Panc1 (cell line): ENCODE measurements at regions of chr3 and their contacts with region 1.

Region 1: DNA sequence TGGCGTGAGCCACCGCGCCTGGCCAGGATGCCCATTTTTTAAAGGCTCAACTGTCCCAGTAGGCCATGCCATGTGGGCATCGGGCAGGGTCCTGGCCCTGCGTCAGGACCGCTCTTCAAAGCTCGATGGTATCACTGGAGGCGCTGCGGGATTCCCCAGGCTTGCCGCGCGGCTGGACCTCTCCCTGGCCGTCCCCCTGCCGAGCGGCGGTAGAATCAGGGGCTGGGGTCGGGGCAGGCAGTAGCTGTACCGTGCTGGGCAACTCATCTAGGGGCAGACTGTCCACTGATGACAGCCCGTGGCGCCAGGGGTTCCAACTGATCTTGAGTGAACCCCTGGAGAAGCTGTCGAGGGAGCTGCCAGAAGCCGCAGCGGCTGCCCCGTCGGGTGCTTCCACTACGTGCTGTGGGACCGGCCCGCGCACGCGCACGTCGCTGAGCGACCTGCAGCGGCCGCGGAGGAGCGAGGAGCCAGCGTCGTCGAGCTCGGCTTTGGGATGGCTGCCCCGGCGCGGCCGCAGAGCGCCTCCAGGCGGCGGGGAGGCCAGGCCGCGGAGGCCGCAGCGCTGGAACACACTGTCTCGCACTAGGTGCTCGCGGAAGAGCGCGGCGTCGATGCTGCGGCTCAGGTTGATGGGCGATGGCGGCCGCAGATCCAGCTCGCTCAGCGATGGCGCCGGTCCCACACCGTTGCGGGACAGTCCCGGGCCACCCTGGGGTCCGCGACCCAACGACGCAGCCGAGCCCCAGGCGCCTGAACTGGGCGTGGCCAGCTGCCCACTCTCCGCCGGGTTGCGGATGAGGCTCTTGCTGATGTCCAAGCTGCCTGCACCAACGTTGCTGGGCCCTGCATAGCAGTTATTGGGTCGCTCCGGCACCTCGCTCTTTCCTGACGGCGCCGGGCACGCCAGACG is 5.8 kb downstream of the PRRT3 start:
- DNase-seq: no peak
- ATAC-seq: peak; percentile 90
- H3K4me3 ChIP-seq: peak overlapping the region; percentile 58 to 70
- H3K27ac ChIP-seq: peak overlapping the region; percentile 83
- H3K4me1 ChIP-seq: no peaks in the 10 kb centered on the region
- H3K27me3 ChIP-seq: no peaks in the 10 kb centered on the region
- CTCF ChIP-seq: peak; percentile 88

Region 2: DNA sequence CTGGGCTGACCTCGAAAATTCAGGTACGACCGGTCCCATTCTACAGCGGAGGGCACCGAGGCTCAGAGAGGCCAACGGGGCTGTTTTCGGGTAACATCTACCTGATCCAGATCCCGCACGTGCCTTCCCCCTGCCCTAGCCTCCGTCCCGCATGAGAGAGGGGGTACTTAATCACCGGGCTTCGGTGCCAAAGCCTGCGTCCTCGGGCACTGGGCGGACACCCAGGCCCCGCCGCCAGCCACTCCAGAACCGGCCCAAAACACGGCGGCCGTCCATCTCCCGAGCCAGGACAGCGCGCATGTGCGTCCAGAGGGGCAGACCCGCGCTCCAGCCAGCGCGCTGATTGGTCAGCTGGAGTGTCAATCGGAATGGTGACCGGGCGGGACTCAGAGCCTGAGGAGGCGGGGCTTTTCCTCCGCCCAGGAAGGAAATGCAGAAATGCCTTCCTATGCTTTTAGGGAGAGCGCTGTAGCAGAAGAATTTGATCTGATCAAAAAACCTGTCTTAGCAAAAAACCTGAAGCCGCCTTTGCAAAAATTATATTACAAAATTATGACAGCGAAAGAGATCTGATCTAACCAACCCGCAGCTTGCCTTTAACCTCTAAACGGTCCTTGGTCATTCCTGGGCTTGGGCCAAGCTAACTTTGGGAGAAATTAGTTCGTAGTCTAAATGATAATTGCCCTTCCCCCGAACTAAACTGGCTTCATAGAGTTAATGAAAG is 102.5 kb before region 1 on chr3 and contains the start of gene RPUSD3:
- CTCF ChIA-PET with region 1: interaction called, 7 read pairs
- POLR2A ChIA-PET with region 1: interaction called, 14 read pairs
- in situ Hi-C with region 1: no loop called
- intact Hi-C with region 1: no loop called
- DNase-seq: peak; percentile 69
- ATAC-seq: peak; percentile 99
- H3K4me3 ChIP-seq: peak within 1 kb of the TSS; percentile 68 to 81
- H3K27ac ChIP-seq: peak within 1 kb of the TSS; percentile 87
- H3K4me1 ChIP-seq: no peaks in the 10 kb centered on the region
- H3K27me3 ChIP-seq: no peaks in the 10 kb centered on the region
- CTCF ChIP-seq: no peak
- total RNA-seq, gene RPUSD3: 40.4 TPM